Breast epithelium (tissue), 4 donors: ENCODE measurements at regions of chr5 and their contacts with region 1.

Region 1: GRCh38 chr5:68898951-68899471 is 194.8 kb upstream of the SLC30A5 start:
- DNase-seq: no peak
- H3K4me3 ChIP-seq: no peak overlapping the region
- H3K27ac ChIP-seq: peak overlapping the region in 1 of 2 donors; percentile 2
- H3K4me1 ChIP-seq: no peaks in the 10 kb centered on the region
- H3K27me3 ChIP-seq: no peaks in the 10 kb centered on the region
- CTCF ChIP-seq: no peak
- POLR2A ChIP-seq: no peak

Region 2: DNA sequence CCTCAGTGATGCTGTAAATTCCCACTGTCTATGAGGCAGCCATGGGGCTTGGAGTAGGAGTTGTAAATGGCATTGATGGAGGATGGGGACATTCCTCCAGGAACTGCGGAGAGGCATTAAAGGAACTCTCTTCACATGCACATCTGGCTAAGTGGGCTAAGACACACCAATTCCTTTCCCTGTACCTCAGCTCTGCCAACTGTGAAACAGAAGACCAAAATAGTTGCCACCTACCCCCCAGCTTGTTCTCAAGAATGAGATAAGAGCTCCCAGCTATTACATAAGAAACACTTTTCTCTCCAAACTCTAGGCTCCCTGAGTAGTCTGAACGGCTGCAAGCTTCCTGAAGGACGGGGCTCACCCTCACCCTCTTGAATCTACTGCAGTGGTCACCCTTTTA is 50.2 kb after region 1 on chr5:
- intact Hi-C with region 1: loop called (anchors 5 kb)
- DNase-seq: no peak
- H3K4me3 ChIP-seq: no peak overlapping the region
- H3K27ac ChIP-seq: peak overlapping the region; percentile 74 to 77
- H3K4me1 ChIP-seq: peaks cover 0 to 17% of the 10 kb centered on the region in 2 donors
- H3K27me3 ChIP-seq: no peaks in the 10 kb centered on the region
- CTCF ChIP-seq: no peak
- POLR2A ChIP-seq: no peak